Heart left ventricle (tissue), 16 donors: ENCODE measurements at regions of chrX and their contacts with region 1.

Region 1: DNA sequence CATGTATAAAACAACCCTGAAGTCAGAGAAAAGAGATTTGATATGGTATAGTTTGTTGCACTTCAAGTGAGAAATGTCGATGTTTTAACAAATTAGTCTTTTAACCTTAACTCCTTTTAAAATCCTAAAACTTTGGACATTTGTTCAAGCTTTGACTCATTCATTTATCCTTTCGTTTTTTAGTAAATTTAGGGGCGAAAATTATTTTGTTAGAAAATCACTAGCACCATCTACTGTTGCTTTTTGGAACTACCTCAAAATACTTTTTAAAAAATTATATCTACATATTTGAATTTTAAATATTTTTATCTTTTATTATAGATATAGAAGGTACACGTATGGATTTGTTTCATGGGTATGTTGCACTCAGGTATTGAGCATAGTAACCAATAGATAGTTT is 165.1 kb upstream of the POF1B start:
- DNase-seq: no peak
- ATAC-seq: no peak
- H3K4me3 ChIP-seq: peak overlapping the region in 1 of 12 donors; percentile 20
- H3K27ac ChIP-seq: peak overlapping the region in 1 of 12 donors; percentile 47
- H3K4me1 ChIP-seq: no peaks in the 10 kb centered on the region
- H3K27me3 ChIP-seq: no peaks in the 10 kb centered on the region
- CTCF ChIP-seq: peak in 11 of 12 donors; percentile 14 to 54 (median 46)
- POLR2A ChIP-seq: no peak

Region 2: GRCh38 chrX:85024044-85024443 is 520.6 kb before region 1 on chrX:
- intact Hi-C with region 1: no loop called
- DNase-seq: no peak
- ATAC-seq: no peak
- H3K4me3 ChIP-seq: no peak overlapping the region
- H3K27ac ChIP-seq: no peak overlapping the region
- H3K4me1 ChIP-seq: peaks cover 0 to 7% (median 0%) of the 10 kb centered on the region in 12 donors
- H3K27me3 ChIP-seq: no peaks in the 10 kb centered on the region
- CTCF ChIP-seq: no peak
- POLR2A ChIP-seq: no peak

Region 3: GRCh38 chrX:85084770-85085393 is 459.7 kb before region 1 on chrX:
- intact Hi-C with region 1: loop called in 2 of 10 experiments (anchors 10 kb)
- DNase-seq: no peak
- ATAC-seq: no peak
- H3K4me3 ChIP-seq: no peak overlapping the region
- H3K27ac ChIP-seq: no peak overlapping the region
- H3K4me1 ChIP-seq: no peaks in the 10 kb centered on the region
- H3K27me3 ChIP-seq: no peaks in the 10 kb centered on the region
- CTCF ChIP-seq: peak; percentile 44 to 86 (median 73)
- POLR2A ChIP-seq: no peak

Region 4: DNA sequence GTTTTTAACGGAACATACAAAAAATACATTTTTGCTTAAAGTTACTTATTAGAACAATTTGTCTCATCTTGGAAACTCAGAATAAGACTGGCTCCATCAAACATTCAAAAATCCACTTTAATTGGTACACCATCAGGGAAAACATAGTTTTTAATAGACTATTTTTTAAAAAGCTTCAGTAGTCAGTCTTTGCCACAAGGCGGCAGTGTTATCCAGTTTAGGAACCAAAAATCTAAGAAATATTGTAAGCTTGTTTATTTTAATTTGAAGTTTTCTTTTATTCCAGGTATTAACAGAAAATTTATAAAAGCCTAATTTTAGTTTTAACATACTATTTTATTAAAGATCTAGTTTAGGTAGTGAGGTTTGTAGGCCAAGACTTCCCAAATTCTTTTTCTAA is 433.3 kb before region 1 on chrX:
- intact Hi-C with region 1: loop called in 9 of 10 experiments (anchors 5 kb)
- DNase-seq: no peak
- ATAC-seq: no peak
- H3K4me3 ChIP-seq: no peak overlapping the region
- H3K27ac ChIP-seq: no peak overlapping the region
- H3K4me1 ChIP-seq: no peaks in the 10 kb centered on the region
- H3K27me3 ChIP-seq: no peaks in the 10 kb centered on the region
- CTCF ChIP-seq: peak; percentile 32 to 71 (median 60)
- POLR2A ChIP-seq: no peak